ENCODE measurements at regions of chr7 and their contacts with region 1.

Region 1: GRCh38 chr7:53350241-53350640 is 314.8 kb downstream of the POM121L12 start:
- DNase-seq: peak; percentile 41 to 90
- H3K4me3 ChIP-seq: no peak overlapping the region
- H3K27ac ChIP-seq: no peak overlapping the region
- H3K4me1 ChIP-seq: no peaks in the 10 kb centered on the region
- H3K27me3 ChIP-seq: no peaks in the 10 kb centered on the region
- CTCF ChIP-seq: peak; percentile 86 to 93 (median 88)
- EP300 ChIP-seq: no peak
- POLR2A ChIP-seq: no peak
- RAD21 ChIP-seq: peak; percentile 68 to 79

Region 2: DNA sequence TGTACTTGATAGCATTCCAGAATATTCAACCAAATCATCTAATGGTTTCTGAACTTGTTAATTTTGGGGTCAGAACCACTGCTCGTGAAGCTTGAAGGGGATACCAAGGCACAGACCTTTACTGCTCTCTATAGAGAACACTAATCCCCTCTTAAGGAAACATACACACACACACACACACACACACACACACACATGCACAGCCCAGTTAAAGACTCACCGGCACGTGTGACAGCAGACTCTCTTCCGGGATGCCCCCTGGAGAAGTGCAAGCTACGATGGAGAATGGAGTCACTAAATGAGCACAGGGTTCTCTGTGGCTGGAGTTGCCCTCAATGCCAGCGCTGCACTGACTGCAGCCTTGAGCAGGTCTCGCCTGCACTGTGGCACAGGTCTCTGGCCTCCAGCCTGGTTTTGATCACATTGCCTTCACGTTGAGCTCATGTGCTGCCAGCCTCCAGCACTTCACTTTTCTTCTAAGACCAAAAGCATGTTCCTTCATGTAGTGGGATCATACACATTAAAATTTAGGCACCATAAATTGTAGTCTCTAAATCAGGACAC is 14.1 kb before region 1 on chr7:
- CTCF ChIA-PET with region 1: interaction called, 18 read pairs
- POLR2A ChIA-PET with region 1: no interaction called
- DNase-seq: no peak
- H3K4me3 ChIP-seq: no peak overlapping the region
- H3K27ac ChIP-seq: no peak overlapping the region
- H3K4me1 ChIP-seq: no peaks in the 10 kb centered on the region
- H3K27me3 ChIP-seq: no peaks in the 10 kb centered on the region
- CTCF ChIP-seq: no peak
- EP300 ChIP-seq: no peak
- POLR2A ChIP-seq: no peak
- RAD21 ChIP-seq: no peak

Region 3: DNA sequence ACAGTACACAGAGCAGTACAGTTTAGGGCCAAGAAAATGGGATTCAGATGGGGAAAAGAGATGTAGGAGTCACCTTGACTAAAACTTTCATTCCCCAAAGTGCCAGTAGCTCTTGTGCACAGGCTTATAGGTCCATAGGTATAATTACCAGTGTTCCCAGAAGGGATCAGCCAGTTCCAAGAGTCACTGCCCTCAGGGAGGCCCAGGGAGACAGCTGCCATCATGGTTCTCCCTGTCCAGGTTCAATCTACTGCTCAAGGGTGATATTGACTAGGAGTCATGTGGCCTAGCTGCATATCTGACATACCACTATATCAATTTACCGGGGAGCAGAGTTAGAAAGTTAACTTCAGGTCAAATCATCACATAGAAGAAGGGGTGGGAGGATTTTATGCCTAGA is 16.1 kb after region 1 on chr7:
- CTCF ChIA-PET with region 1: interaction called, 10 read pairs
- POLR2A ChIA-PET with region 1: interaction called, 3 read pairs
- DNase-seq: no peak
- H3K4me3 ChIP-seq: no peak overlapping the region
- H3K27ac ChIP-seq: no peak overlapping the region
- H3K4me1 ChIP-seq: no peaks in the 10 kb centered on the region
- H3K27me3 ChIP-seq: no peaks in the 10 kb centered on the region
- CTCF ChIP-seq: no peak
- EP300 ChIP-seq: no peak
- POLR2A ChIP-seq: no peak
- RAD21 ChIP-seq: no peak

Region 4: GRCh38 chr7:53383131-53383530 is 32.9 kb after region 1 on chr7:
- CTCF ChIA-PET with region 1: no interaction called
- POLR2A ChIA-PET with region 1: no interaction called
- DNase-seq: no peak
- H3K4me3 ChIP-seq: no peak overlapping the region
- H3K27ac ChIP-seq: no peak overlapping the region
- H3K4me1 ChIP-seq: no peaks in the 10 kb centered on the region
- H3K27me3 ChIP-seq: no peaks in the 10 kb centered on the region
- CTCF ChIP-seq: no peak
- EP300 ChIP-seq: no peak
- POLR2A ChIP-seq: no peak
- RAD21 ChIP-seq: no peak